B cell (primary cell): ENCODE measurements at regions of chr11 and their contacts with region 1.

Region 1: DNA sequence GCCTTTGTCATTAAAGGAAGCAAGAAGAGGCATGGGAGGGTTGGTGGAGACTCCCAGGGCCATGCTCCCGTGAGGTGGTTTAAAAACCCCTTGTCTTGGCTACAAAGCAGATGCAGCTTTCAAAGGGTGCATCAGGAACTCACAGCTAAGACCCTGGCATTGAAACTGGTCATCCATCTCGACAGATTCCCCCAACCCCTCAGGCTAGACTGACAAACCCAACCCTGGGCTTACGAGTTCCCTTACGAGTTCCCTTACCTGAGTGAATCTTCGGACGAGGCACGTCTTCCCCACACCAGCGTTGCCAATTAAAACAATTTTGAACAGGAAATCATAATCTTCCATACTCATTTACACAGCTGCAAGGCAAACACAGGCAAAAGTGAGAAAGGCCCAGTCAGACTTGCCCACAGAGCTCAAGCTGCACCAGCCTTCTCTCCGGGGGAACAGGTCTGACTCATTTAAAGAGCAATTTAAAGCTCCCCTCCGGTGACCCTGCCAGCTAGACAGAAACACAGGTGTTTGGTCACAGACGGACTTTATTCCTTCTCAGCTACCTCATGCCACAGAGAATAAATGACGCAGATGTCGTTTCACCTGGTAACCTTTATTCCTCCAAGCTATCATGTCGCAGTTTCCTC is 74.6 kb downstream of the RAB30 start:
- DNase-seq: peak; percentile 41
- ATAC-seq: peak; percentile 81
- H3K4me3 ChIP-seq: no peak overlapping the region
- H3K4me3 Mint-ChIP-seq: peak overlapping the region; percentile 81
- H3K27ac ChIP-seq: peak overlapping the region in 1 of 2 donors; percentile 28
- H3K27ac Mint-ChIP-seq: peak overlapping the region; percentile 85
- H3K4me1 ChIP-seq: peaks cover 57 to 66% of the 10 kb centered on the region in 2 donors
- H3K4me1 Mint-ChIP-seq: peaks cover 89% of the 10 kb centered on the region
- H3K27me3 ChIP-seq: no peaks in the 10 kb centered on the region
- H3K27me3 Mint-ChIP-seq: no peaks in the 10 kb centered on the region
- CTCF ChIP-seq: no peak

Region 2: GRCh38 chr11:82959987-82960778 is 36.9 kb before region 1 on chr11:
- CTCF ChIA-PET with region 1: no interaction called
- POLR2A ChIA-PET with region 1: interaction called, 3 read pairs
- intact Hi-C with region 1: loop called (anchors 5 kb)
- DNase-seq: peak; percentile 56
- ATAC-seq: peak; percentile 77
- H3K4me3 ChIP-seq: peak overlapping the region in 2 of 5 experiments; percentile 3 to 43
- H3K4me3 Mint-ChIP-seq: peak overlapping the region; percentile 67
- H3K27ac ChIP-seq: peak overlapping the region; percentile 70 to 79
- H3K27ac Mint-ChIP-seq: peak overlapping the region; percentile 92
- H3K4me1 ChIP-seq: peaks cover 47 to 48% of the 10 kb centered on the region in 2 donors
- H3K4me1 Mint-ChIP-seq: peaks cover 59% of the 10 kb centered on the region
- H3K27me3 ChIP-seq: no peaks in the 10 kb centered on the region
- H3K27me3 Mint-ChIP-seq: no peaks in the 10 kb centered on the region
- CTCF ChIP-seq: no peak

Region 3: GRCh38 chr11:83007909-83008580 is 11.0 kb after region 1 on chr11:
- CTCF ChIA-PET with region 1: interaction called, 5 read pairs
- POLR2A ChIA-PET with region 1: no interaction called
- intact Hi-C with region 1: loop called (anchors 2 kb)
- DNase-seq: peak; percentile 45
- ATAC-seq: peak; percentile 39
- H3K4me3 ChIP-seq: no peak overlapping the region
- H3K4me3 Mint-ChIP-seq: peak overlapping the region; percentile 72
- H3K27ac ChIP-seq: peak overlapping the region in 1 of 2 donors; percentile 65
- H3K27ac Mint-ChIP-seq: peak overlapping the region; percentile 84
- H3K4me1 ChIP-seq: peaks cover 47 to 50% of the 10 kb centered on the region in 2 donors
- H3K4me1 Mint-ChIP-seq: peaks cover 74% of the 10 kb centered on the region
- H3K27me3 ChIP-seq: no peaks in the 10 kb centered on the region
- H3K27me3 Mint-ChIP-seq: no peaks in the 10 kb centered on the region
- CTCF ChIP-seq: no peak

Region 4: DNA sequence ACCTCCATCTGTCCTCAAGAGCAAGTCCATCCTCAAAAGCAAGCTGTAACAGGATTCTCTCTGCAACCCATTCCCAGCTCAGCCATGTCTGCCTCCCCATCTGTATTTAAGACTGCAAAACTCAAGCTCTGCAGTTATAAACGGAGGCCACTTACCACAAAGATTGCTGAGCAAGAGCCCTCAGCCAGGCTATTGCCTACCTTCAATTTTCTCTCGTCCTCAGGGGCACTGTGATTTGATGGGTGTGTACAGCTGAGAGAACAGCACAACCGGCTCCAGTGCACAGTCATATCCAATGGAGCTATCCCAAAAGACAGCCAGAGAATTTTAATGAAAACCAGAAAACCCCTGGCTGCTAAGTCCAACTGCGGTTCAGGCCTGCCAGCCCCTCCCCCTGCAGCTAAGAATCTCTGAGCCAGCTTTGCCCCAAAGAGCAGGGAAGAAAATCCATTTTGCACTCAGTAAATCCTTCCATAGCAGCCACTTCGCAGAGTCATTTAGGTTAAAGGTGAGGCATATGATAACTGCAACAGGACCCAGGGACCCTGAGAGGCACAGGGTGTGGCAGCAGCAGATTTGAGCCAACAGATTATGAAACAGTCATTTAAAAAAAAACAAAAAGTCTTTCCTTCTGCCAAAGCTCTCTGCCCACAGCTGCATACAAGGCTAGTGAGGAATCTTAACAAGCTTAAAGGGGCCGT is 37.0 kb after region 1 on chr11:
- CTCF ChIA-PET with region 1: interaction called, 3 read pairs
- POLR2A ChIA-PET with region 1: interaction called, 3 read pairs
- intact Hi-C with region 1: loop called (anchors 2 kb)
- DNase-seq: no peak
- ATAC-seq: no peak
- H3K4me3 ChIP-seq: peak overlapping the region in 1 of 5 experiments; percentile 14
- H3K4me3 Mint-ChIP-seq: peak overlapping the region; percentile 88
- H3K27ac ChIP-seq: peak overlapping the region in 1 of 2 donors; percentile 96
- H3K27ac Mint-ChIP-seq: peak overlapping the region; percentile 88
- H3K4me1 ChIP-seq: peaks cover 56% of the 10 kb centered on the region in 2 donors
- H3K4me1 Mint-ChIP-seq: peaks cover 71% of the 10 kb centered on the region
- H3K27me3 ChIP-seq: no peaks in the 10 kb centered on the region
- H3K27me3 Mint-ChIP-seq: no peaks in the 10 kb centered on the region
- CTCF ChIP-seq: no peak